A549 (cell line): ENCODE measurements at regions of chr1 and their contacts with region 1.

Region 1: GRCh38 chr1:231596337-231596791 is 30.2 kb upstream of the DISC1 start:
- DNase-seq: no peak
- ATAC-seq: peak in 1 of 2 experiments; percentile 32; a peak in 1 of 6 replicates
- H3K4me3 ChIP-seq: no peak overlapping the region
- H3K27ac ChIP-seq: no peak overlapping the region
- H3K4me1 ChIP-seq: no peaks in the 10 kb centered on the region
- CTCF ChIP-seq: no peak
- EP300 ChIP-seq: no peak
- POLR2A ChIP-seq: no peak
- RAD21 ChIP-seq: no peak

Region 2: DNA sequence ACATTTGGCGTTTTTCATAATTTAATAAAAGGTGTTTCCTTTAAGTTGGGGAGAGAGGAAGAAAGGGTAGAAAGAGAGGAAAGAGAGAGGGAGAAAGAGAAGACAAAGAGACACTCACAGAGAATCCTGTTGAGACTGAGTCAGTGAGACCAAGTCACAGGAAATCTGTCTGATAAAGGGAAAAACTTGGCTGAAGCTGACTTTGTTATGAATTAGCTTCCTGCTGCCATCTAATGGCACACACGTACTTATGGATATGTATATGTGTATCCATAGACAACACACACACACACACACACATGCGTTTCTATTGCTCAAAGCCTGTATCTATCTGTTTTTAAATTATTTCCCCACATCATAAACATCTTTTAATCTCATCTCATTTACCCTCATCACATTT is 12.2 kb before region 1 on chr1:
- CTCF ChIA-PET with region 1: interaction called, 11 read pairs
- POLR2A ChIA-PET with region 1: no interaction called
- DNase-seq: peak; percentile 67 to 86
- ATAC-seq: peak; percentile 88 to 90
- H3K4me3 ChIP-seq: no peak overlapping the region
- H3K27ac ChIP-seq: peak overlapping the region; percentile 25 to 36; a peak in 3 of 6 replicates
- H3K4me1 ChIP-seq: peaks cover 20% of the 10 kb centered on the region
- CTCF ChIP-seq: peak; percentile 69
- EP300 ChIP-seq: no peak
- POLR2A ChIP-seq: no peak
- RAD21 ChIP-seq: peak; percentile 78

Region 3: GRCh38 chr1:231734417-231734816 is 138.1 kb after region 1 on chr1:
- CTCF ChIA-PET with region 1: no interaction called
- POLR2A ChIA-PET with region 1: no interaction called
- DNase-seq: no peak
- ATAC-seq: no peak
- H3K4me3 ChIP-seq: no peak overlapping the region
- H3K27ac ChIP-seq: no peak overlapping the region
- H3K4me1 ChIP-seq: no peaks in the 10 kb centered on the region
- CTCF ChIP-seq: no peak
- EP300 ChIP-seq: no peak
- POLR2A ChIP-seq: no peak
- RAD21 ChIP-seq: no peak